ENCODE measurements at regions of chr22 and their contacts with region 1.

Region 1: GRCh38 chr22:39900306-39901227 is at the start of gene GRAP2:
- DNase-seq: peak; percentile 84 to 91 (median 86)
- H3K4me3 ChIP-seq: peak within 1 kb of the TSS; percentile 57 to 72
- H3K4me3 Mint-ChIP-seq: peak within 1 kb of the TSS; percentile 91 to 100 (median 97)
- H3K27ac ChIP-seq: peak within 1 kb of the TSS; percentile 75
- H3K27ac Mint-ChIP-seq: peak within 1 kb of the TSS in 6 of 7 donors; percentile 95 to 98 (median 98)
- H3K4me1 ChIP-seq: peaks cover 29% of the 10 kb centered on the region
- H3K4me1 Mint-ChIP-seq: peaks cover 9 to 31% (median 17%) of the 10 kb centered on the region in 4 donors
- H3K27me3 ChIP-seq: no peaks in the 10 kb centered on the region
- H3K27me3 Mint-ChIP-seq: no peaks in the 10 kb centered on the region
- total RNA-seq, gene GRAP2: 134 to 140 TPM

Region 2: DNA sequence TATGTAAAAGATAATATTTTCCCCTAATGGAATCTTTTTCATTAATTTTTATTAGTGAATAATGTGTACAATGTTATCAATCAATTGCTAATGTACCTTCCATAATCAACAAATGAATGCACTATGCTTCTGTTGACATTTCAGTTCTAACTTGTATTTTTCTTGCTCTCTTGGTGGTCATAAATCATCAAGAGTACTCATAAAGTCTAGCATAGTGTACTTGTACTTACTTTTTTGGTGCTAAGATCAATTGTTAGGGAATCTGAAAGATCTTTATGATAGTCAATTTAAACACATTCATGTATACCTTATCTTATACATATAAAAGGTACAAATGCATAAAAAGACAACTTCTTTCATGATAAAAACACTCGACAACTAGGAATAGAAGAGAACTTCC is 17.5 kb before region 1 on chr22:
- CTCF ChIA-PET with region 1: interaction called, 4 read pairs
- POLR2A ChIA-PET with region 1: no interaction called
- intact Hi-C with region 1: loop called (anchors 2 kb)
- DNase-seq: no peak
- H3K4me3 ChIP-seq: no peak overlapping the region
- H3K4me3 Mint-ChIP-seq: no peak overlapping the region
- H3K27ac ChIP-seq: no peak overlapping the region
- H3K27ac Mint-ChIP-seq: no peak overlapping the region
- H3K4me1 ChIP-seq: no peaks in the 10 kb centered on the region
- H3K4me1 Mint-ChIP-seq: peaks cover 0 to 3% (median 1%) of the 10 kb centered on the region in 4 donors
- H3K27me3 ChIP-seq: no peaks in the 10 kb centered on the region
- H3K27me3 Mint-ChIP-seq: no peaks in the 10 kb centered on the region

Region 3: GRCh38 chr22:39927544-39927943 is 27.0 kb after region 1 on chr22:
- CTCF ChIA-PET with region 1: interaction called, 15 read pairs
- POLR2A ChIA-PET with region 1: interaction called, 424 read pairs
- intact Hi-C with region 1: loop called (anchors 2 kb)
- DNase-seq: no peak
- H3K4me3 ChIP-seq: peak overlapping the region; percentile 22 to 27
- H3K4me3 Mint-ChIP-seq: no peak overlapping the region
- H3K27ac ChIP-seq: peak overlapping the region; percentile 49
- H3K27ac Mint-ChIP-seq: peak overlapping the region in 1 of 7 donors; percentile 92
- H3K4me1 ChIP-seq: peaks cover 100% of the 10 kb centered on the region
- H3K4me1 Mint-ChIP-seq: peaks cover 36 to 42% (median 40%) of the 10 kb centered on the region in 4 donors
- H3K27me3 ChIP-seq: no peaks in the 10 kb centered on the region
- H3K27me3 Mint-ChIP-seq: no peaks in the 10 kb centered on the region

Region 4: DNA sequence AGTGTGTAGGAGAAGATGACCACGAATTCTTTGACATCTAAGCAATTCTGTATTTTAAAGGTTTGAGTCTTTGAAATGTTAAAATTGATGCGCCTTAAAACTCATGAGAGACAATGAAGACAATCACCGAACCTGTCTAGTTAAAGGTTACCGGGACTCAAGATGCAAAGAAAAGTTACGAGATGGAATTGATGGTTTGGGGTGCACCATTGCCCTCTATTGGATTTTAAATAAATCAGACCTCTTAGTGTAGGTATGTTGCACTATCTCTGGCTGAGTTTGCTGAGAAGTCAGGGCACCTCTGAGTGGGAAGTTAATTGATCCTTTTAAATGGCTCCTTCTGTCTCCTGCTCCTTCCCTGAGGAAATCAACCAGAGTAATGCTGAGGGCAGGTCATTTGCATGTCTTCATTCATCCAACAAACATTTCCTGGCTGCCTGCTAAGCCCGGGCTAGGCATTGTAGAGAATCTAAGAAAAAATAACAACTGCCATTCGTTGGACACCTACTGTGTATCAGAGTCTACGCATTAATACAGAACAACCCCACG is 40.3 kb after region 1 on chr22:
- CTCF ChIA-PET with region 1: interaction called, 10 read pairs
- POLR2A ChIA-PET with region 1: interaction called, 97 read pairs
- intact Hi-C with region 1: loop called (anchors 1 kb)
- DNase-seq: peak; percentile 60 to 72 (median 67)
- H3K4me3 ChIP-seq: no peak overlapping the region
- H3K4me3 Mint-ChIP-seq: peak overlapping the region in 7 of 8 donors; percentile 26 to 79 (median 57)
- H3K27ac ChIP-seq: peak overlapping the region; percentile 29
- H3K27ac Mint-ChIP-seq: peak overlapping the region in 6 of 7 donors; percentile 48 to 91 (median 89)
- H3K4me1 ChIP-seq: peaks cover 100% of the 10 kb centered on the region
- H3K4me1 Mint-ChIP-seq: peaks cover 78 to 96% (median 87%) of the 10 kb centered on the region in 4 donors
- H3K27me3 ChIP-seq: no peaks in the 10 kb centered on the region
- H3K27me3 Mint-ChIP-seq: no peaks in the 10 kb centered on the region

Measured in CD4-positive, alpha-beta memory T cell (primary cell).